ENCODE measurements at regions of chr3 and their contacts with region 1.

Region 1: DNA sequence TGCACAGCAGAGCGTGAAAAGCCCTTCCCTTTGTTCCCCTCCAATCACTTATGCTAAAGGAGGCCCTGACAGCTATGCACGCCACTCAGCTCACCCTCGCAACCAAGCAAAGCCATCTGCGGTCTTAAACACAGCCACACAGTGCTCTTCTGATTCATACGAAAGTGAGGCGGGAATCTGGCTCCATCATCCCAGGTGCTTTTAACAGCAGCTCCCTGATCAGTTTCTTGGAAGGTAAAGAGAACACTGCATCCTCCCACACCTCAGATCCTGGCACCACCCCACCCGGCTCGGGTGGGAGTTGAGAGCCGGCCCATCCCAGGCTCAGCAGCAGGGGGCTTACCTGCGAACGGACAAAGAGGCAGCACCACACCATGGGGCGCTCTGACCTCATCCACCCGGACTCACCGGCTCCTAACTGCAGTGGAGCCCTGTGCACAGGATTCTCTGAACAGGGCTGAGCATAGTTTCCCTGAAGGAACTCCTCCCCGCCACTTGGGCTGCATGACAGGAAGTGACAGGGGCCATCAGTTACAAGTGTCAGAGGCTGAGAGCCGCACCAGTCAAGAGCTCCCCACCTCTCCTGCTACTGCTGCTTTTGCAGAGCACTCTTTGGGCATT is 114.3 kb upstream of the ARHGEF3 start:
- DNase-seq: peak; percentile 60
- CTCF ChIP-seq: no peak

Region 2: GRCh38 chr3:56825567-56826438 is 90.3 kb before region 1 on chr3:
- CTCF ChIA-PET with region 1: no interaction called
- POLR2A ChIA-PET with region 1: no interaction called
- DNase-seq: no peak
- CTCF ChIP-seq: no peak

Region 3: GRCh38 chr3:56904552-56905215 is 11.4 kb before region 1 on chr3:
- CTCF ChIA-PET with region 1: interaction called, 14 read pairs
- POLR2A ChIA-PET with region 1: no interaction called
- DNase-seq: no peak
- CTCF ChIP-seq: no peak

Region 4: DNA sequence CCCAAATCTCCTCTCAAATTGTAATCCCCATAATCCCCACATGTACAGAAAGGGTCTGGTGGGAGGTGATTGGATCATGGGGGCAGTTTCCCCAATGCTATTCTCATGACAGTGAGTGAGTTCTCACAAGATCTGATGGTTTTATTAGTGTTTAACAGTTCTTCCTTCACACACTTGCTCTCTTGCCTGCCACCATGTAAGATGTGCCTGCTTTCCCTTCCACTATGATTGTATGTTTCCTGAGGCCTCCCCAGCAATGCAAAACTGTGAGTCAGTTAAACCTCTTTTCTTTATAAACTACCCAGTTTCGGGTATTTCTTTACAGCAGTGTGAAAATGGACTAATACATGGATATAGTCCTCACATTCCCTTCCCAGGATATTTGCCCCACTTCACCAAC is 17.7 kb after region 1 on chr3:
- CTCF ChIA-PET with region 1: no interaction called
- POLR2A ChIA-PET with region 1: no interaction called
- DNase-seq: no peak
- CTCF ChIP-seq: no peak